ENCODE measurements at regions of chr9 and their contacts with region 1.

Region 1: DNA sequence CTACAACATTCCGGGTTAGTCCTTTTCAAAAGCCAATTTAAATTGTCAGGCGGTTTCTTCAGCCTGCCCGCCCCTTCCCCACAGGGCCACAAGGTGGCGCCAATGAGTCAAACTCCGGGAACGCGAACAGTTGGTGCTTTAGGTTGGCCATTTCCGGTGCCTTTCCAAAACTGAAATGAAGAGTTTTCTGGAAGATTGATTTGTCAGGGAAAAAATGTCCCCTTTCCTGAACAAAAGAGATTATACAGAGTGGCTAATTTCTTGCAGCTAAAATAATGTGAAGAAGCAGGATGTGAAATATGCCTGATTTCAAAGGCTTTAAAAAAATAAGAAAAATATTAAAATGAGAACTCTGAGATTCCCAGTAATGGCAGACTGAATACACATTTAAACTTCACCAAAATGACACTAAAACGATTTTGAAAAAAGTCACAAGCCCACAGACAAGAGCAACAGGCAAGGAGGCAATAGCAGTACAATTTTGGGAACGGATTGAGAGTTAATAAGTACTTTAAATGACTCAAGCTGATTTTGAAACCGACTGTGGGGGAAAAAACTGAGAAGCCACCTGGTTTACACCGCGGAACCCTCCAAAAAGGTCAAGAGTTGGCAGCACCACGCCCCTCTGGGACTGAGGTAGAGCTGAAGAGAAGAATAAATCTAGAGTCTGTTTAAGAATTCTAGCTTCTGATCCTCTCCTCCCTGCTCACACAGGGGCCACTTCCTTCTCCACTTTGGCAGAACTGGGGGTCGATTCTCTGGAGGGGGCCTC is 45.7 kb downstream of the SLC46A2 start:
- DNase-seq: no peak
- H3K4me3 ChIP-seq: no peak overlapping the region
- CTCF ChIP-seq: peak; percentile 92

Region 2: DNA sequence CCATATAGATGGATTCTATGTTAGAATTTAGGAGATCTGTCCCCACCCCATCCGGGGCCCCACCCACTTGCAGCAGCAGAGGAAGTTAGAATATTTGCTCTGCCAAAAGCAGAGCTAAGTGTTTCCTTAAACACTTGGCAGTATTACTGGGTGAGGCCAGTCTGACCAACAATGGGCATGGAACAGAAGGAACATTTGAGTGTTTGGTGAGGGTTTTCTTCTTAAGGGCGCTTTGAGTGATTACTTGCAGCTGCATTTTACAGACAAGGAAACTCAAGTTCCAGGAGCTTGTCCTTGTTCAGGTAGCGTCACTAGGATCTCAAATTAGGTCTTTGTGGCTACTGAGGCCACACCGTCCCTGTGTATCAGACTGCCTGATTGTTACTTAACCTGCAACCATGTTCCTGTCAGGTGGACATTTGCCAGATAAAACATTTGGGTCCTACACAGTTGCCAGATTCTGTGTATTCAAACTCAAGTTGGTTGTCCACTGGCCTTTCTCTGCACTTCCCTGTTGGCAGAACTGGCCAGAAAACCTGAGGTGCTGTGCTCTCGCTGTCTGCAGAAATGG is 13.6 kb before region 1 on chr9:
- CTCF ChIA-PET with region 1: interaction called, 28 read pairs
- POLR2A ChIA-PET with region 1: interaction called, 5 read pairs
- DNase-seq: no peak
- H3K4me3 ChIP-seq: no peak overlapping the region
- CTCF ChIP-seq: no peak

Region 3: GRCh38 chr9:112858625-112859147 is 13.7 kb after region 1 on chr9:
- CTCF ChIA-PET with region 1: interaction called, 38 read pairs
- POLR2A ChIA-PET with region 1: no interaction called
- DNase-seq: no peak
- H3K4me3 ChIP-seq: no peak overlapping the region
- CTCF ChIP-seq: no peak

Region 4: GRCh38 chr9:113026200-113026599 is 181.2 kb after region 1 on chr9:
- CTCF ChIA-PET with region 1: no interaction called
- POLR2A ChIA-PET with region 1: no interaction called
- DNase-seq: peak; percentile 1
- H3K4me3 ChIP-seq: no peak overlapping the region
- CTCF ChIP-seq: no peak

Measured in AG04449 (cell line).